Calu3 (cell line): ENCODE measurements at regions of chr17 and their contacts with region 1.

Region 1: DNA sequence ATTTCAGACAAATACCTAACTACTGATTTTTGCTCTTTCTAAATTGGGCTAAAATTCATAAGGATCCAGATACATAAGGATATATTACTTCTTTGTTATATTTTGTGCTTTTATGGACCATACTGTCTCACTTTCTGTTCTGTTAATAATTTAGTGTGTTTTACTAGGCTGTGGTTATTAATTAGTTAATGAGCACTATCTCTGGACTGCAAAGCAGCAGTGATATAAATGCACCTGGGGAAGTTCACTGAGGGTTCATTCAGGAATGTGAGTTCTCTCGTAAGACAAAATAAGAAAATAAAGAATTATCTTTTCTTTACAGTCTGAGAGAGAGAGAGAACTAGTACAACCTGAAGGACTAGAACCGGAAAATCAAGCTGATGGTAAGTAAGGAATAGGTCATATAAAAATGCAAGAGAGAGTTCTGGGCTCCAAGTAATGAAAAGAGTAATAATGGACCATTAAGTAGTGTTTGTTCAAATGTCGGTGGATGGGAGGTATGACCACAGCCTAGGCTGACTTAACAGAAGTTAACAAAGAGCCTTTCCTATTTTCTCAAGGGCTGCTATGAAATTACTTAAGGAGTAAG is 55.6 kb downstream of the IKZF3 start:
- DNase-seq: peak; percentile 98
- H3K4me3 Mint-ChIP-seq: peak overlapping the region; percentile 1
- H3K27ac Mint-ChIP-seq: peak overlapping the region; percentile 16
- H3K4me1 Mint-ChIP-seq: peaks cover 37% of the 10 kb centered on the region
- H3K27me3 Mint-ChIP-seq: no peaks in the 10 kb centered on the region
- CTCF ChIP-seq: no peak

Region 2: DNA sequence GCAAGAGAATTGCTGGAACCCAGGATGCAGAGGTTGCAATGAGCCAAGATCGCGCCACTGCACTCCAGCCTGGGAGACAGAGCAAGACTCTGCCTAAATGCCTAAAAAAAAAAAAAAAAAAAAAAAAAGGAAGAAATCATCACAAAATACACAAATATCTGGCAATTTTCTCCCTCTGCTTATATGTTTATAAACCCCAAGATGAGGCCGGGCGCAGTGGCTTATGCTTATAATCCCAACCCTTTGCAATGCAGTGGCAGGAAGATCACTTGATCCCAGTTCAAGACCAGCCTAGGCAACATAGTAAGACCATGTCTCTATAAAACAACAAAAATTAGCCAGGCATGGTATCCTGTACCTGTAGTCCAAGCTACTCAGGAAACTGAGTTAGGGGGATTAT is 378.9 kb before region 1 on chr17:
- CTCF ChIA-PET with region 1: no interaction called
- intact Hi-C with region 1: no loop called
- DNase-seq: no peak
- H3K4me3 Mint-ChIP-seq: no peak overlapping the region
- H3K27ac Mint-ChIP-seq: no peak overlapping the region
- H3K4me1 Mint-ChIP-seq: no peaks in the 10 kb centered on the region
- H3K27me3 Mint-ChIP-seq: no peaks in the 10 kb centered on the region
- CTCF ChIP-seq: no peak

Region 3: DNA sequence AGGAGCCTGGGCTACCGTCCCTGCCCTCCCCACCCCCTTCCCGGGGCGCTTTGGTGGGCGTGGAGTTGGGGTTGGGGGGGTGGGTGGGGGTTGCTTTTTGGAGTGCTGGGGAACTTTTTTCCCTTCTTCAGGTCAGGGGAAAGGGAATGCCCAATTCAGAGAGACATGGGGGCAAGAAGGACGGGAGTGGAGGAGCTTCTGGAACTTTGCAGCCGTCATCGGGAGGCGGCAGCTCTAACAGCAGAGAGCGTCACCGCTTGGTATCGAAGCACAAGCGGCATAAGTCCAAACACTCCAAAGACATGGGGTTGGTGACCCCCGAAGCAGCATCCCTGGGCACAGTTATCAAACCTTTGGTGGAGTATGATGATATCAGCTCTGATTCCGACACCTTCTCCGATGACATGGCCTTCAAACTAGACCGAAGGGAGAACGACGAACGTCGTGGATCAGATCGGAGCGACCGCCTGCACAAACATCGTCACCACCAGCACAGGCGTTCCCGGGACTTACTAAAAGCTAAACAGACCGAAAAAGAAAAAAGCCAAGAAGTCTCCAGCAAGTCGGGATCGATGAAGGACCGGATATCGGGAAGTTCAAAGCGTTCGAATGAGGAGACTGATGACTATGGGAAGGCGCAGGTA is 346.5 kb before region 1 on chr17:
- CTCF ChIA-PET with region 1: no interaction called
- intact Hi-C with region 1: no loop called
- DNase-seq: peak; percentile 65
- H3K4me3 Mint-ChIP-seq: peak overlapping the region; percentile 79
- H3K27ac Mint-ChIP-seq: peak overlapping the region; percentile 92
- H3K4me1 Mint-ChIP-seq: peaks cover 20% of the 10 kb centered on the region
- H3K27me3 Mint-ChIP-seq: no peaks in the 10 kb centered on the region
- CTCF ChIP-seq: peak; percentile 13

Region 4: GRCh38 chr17:39605492-39606433 is 202.7 kb before region 1 on chr17:
- CTCF ChIA-PET with region 1: interaction called, 24 read pairs
- intact Hi-C with region 1: no loop called
- DNase-seq: peak; percentile 97
- H3K4me3 Mint-ChIP-seq: peak overlapping the region; percentile 61
- H3K27ac Mint-ChIP-seq: no peak overlapping the region
- H3K4me1 Mint-ChIP-seq: peaks cover 46% of the 10 kb centered on the region
- H3K27me3 Mint-ChIP-seq: peaks cover 100% of the 10 kb centered on the region
- CTCF ChIP-seq: no peak

Region 5: GRCh38 chr17:39653662-39654331 is 154.7 kb before region 1 on chr17:
- CTCF ChIA-PET with region 1: interaction called, 123 read pairs
- intact Hi-C with region 1: no loop called
- DNase-seq: peak; percentile 100
- H3K4me3 Mint-ChIP-seq: no peak overlapping the region
- H3K27ac Mint-ChIP-seq: no peak overlapping the region
- H3K4me1 Mint-ChIP-seq: peaks cover 23% of the 10 kb centered on the region
- H3K27me3 Mint-ChIP-seq: no peaks in the 10 kb centered on the region
- CTCF ChIP-seq: no peak

Region 6: DNA sequence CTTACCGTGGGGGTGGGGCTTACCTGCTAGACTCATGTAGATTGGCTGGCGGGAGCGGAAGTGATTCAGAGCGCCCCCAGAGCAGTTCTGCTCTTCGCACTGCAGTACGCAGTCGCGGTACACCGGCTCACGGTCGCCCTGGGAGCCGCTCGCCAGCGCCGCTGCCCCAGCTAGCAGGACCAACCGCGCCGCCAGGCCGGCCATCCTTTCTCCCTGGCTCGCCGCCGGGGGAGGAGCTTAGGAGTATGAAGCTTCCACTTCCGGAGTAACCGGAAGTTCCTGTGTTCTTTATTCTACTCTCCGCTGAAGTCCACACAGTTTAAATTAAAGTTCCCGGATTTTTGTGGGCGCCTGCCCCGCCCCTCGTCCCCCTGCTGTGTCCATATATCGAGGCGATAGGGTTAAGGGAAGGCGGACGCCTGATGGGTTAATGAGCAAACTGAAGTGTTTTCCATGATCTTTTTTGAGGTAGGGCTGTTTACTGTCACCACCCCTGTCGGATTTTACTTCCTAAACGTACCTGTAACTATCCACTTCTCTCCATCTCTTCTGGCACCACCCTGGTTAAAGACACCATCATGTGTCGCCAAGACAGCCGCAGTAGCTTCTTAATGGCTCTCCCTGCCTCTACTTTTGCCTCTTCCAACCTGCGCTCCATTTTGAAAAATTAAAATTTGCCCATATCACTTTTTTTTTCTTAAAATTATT is 120.5 kb before region 1 on chr17 and contains the start of gene PGAP3:
- CTCF ChIA-PET with region 1: interaction called, 59 read pairs
- intact Hi-C with region 1: no loop called
- DNase-seq: peak; percentile 100
- H3K4me3 Mint-ChIP-seq: peak within 1 kb of the TSS; percentile 64
- H3K27ac Mint-ChIP-seq: peak within 1 kb of the TSS; percentile 63
- H3K4me1 Mint-ChIP-seq: peaks cover 27% of the 10 kb centered on the region
- H3K27me3 Mint-ChIP-seq: no peaks in the 10 kb centered on the region
- CTCF ChIP-seq: no peak
- total RNA-seq, gene PGAP3: 1,186 and 1,276 TPM in 2 replicates

Region 7: DNA sequence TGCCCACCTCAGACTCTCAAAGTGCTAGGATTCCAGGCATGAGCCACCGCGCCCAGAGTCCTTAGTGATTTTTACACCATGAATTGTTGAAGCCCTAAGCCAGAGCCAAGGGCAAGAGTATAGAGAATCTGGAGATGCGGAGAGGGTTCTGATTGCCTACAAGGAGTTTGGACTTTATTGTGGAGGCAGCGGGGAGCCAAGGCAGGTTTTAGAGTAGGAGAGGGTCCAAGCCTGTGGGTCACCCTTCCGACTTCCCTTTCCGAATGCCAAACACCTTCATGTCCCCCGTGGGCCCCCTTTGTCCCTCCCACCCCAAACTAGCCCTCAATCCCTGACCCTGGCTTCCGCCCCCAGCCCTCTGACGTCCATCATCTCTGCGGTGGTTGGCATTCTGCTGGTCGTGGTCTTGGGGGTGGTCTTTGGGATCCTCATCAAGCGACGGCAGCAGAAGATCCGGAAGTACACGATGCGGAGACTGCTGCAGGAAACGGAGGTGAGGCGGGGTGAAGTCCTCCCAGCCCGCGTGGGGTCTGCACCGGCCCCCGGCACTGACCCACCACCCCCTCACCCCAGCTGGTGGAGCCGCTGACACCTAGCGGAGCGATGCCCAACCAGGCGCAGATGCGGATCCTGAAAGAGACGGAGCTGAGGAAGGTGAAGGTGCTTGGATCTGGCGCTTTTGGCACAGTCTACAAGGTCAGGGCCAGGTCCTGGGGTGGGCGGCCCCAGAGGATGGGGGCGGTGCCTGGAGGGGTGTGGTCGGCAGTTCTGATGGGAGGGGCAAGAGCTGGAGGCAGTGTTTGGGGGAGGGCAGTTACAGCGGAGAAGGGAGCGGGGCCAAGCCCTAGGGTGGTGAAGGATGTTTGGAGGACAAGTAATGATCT is 85.3 kb before region 1 on chr17:
- CTCF ChIA-PET with region 1: interaction called, 117 read pairs
- intact Hi-C with region 1: no loop called
- DNase-seq: peak; percentile 75
- H3K4me3 Mint-ChIP-seq: peak overlapping the region; percentile 0
- H3K27ac Mint-ChIP-seq: peak overlapping the region; percentile 28
- H3K4me1 Mint-ChIP-seq: peaks cover 38% of the 10 kb centered on the region
- H3K27me3 Mint-ChIP-seq: no peaks in the 10 kb centered on the region
- CTCF ChIP-seq: no peak

Region 8: DNA sequence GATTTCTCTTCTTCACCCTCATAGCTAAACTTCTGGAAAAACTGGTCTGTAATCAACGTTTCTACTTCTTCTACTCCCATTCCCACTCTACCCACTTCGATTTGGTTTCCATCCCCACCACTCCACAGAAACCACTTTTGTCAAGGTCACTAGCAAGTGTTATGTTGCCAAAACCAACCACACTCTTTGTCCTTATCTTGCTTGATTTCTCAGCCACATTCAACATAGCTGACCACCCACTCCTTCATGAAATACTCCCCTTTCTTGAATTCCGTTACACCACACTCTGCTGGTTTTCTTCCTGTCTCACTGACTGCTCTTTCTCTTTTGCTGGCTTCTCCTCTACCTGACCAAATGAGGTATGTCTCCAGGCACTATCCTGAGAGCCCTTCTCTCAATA is 43.7 kb after region 1 on chr17:
- CTCF ChIA-PET with region 1: interaction called, 429 read pairs
- intact Hi-C with region 1: no loop called
- DNase-seq: peak; percentile 59
- H3K4me3 Mint-ChIP-seq: no peak overlapping the region
- H3K27ac Mint-ChIP-seq: no peak overlapping the region
- H3K4me1 Mint-ChIP-seq: peaks cover 10% of the 10 kb centered on the region
- H3K27me3 Mint-ChIP-seq: no peaks in the 10 kb centered on the region
- CTCF ChIP-seq: no peak

Region 9: DNA sequence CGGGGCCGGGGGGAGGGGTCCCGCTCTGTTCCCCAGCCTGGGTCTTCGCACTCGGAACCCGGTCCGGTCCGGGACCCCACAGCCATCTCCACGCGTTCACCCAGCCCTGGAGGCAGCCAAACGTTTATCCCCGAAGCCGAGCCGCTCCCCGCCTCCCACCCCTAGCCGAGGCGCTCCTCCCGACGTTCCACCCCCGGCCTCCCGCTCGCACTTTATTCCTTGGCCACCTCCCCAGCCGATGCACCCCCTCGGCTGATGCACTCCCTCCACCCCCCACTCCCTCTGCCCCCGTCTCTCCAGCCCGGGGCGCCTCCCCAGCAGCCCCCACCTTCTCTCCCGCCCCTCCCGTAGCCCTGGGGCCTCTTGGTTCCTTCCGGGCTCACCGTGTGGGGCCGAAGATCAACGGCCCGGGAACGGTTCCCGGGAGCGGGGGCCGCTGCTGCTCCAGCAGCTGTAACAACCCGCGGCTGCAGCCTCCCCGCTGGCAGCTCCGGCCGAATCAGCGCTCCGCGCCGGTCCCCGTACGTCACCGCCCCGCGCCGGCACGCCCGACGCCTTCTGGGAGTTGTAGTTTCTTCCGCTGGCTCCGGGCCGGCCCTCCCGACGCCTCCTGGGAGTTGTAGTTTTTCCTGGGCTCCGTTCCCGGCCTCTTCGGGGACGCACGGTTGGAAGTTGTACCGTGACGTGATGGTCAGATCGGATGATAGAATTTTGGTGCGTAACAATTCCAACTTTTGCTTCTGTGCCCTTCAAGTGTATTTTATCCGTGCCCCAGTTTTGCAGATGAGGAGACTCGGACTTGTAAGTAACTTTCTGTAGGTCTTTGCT is 118.8 kb after region 1 on chr17 and contains the starts of genes LRRC3C and ORMDL3:
- CTCF ChIA-PET with region 1: interaction called, 28 read pairs
- intact Hi-C with region 1: loop called (anchors 1 kb)
- DNase-seq: no peak
- H3K4me3 Mint-ChIP-seq: peak within 1 kb of the TSS; percentile 74
- H3K27ac Mint-ChIP-seq: peak within 1 kb of the TSS; percentile 66
- H3K4me1 Mint-ChIP-seq: peaks cover 60% of the 10 kb centered on the region
- H3K27me3 Mint-ChIP-seq: no peaks in the 10 kb centered on the region
- CTCF ChIP-seq: no peak
- total RNA-seq, gene LRRC3C: not detected in 2 replicates
- total RNA-seq, gene ORMDL3: 1,738 and 1,968 TPM in 2 replicates